ENCODE measurements at regions of chr17 and their contacts with region 1.

Region 1: DNA sequence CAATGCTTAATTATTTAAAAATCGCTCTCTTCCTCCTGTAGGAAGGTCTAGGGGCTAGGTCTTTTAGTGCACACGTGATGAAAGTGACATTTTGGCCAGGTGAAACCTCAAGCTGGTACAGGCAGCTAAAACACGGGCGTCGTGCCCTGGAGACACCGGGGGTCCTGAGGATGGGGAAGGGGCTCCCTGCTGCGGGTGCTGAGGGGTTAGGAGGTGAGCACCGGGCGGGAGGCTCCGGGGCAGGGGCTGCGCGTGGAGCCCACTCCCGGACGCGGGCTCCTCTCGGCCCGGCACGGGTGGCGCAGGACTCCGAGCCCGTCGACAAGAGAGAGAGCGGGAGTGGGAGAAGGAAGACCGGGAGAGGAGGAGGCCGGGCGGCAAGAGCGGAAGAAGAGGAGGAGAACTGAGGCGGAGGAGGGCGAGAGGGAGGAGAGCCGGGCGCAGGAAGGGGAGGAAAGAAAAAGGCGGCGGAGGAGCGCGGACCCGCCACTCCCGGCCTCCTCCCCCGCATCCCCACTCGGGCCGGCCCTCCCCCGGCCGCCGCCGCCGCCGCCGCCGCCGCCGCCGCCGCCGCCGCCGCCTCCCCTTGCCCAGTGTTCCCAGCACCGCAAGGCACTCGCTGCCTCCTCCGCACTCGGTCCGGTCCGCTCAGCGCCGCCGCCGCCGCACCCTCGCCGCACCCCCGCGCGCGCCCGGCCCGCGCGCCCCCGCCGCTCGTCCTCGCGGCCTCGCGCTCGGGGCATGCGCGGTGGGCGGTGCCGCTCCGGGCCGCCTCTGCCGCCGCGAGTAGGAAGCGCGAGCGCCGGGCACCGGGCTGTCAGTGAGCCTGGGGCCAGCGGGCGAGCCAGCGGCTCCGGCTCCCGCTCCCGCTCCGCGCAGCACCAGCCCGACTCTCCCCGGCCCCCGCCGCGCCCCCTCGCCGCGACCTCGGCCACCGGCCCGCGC is at the start of gene PRKCA:
- DNase-seq: peak; percentile 52
- H3K4me3 ChIP-seq: peak within 1 kb of the TSS; percentile 76 to 90 (median 83)
- H3K27ac ChIP-seq: peak within 1 kb of the TSS; percentile 27
- H3K4me1 ChIP-seq: peaks cover 26% of the 10 kb centered on the region
- H3K27me3 ChIP-seq: no peaks in the 10 kb centered on the region
- CTCF ChIP-seq: no peak
- POLR2A ChIP-seq: peak; percentile 93
- total RNA-seq, gene PRKCA: 27.3 and 34.2 TPM in 2 replicates

Region 2: DNA sequence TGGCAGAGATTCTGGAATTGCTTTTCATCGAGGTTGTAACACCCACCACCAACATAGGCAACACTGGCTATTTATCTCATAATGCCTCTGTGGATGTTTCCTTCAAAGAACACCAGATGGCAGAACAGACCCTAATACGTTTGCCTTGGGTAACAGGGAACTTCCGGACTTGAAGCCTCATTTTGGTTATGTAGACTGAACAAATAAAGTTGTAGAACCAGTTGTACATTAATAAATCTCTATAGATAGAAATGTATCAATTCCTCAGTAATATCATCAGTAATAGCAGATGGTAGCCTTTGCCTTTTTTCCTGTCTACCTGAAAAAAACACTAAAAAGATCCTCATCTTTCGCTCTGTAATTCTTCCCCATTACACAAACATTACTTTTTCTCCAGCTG is 47.0 kb before region 1 on chr17:
- CTCF ChIA-PET with region 1: interaction called, 6 read pairs
- POLR2A ChIA-PET with region 1: no interaction called
- dilution Hi-C with region 1: no loop called
- intact Hi-C with region 1: loop called (anchors 1 kb)
- DNase-seq: peak; percentile 74
- H3K4me3 ChIP-seq: no peak overlapping the region
- H3K27ac ChIP-seq: no peak overlapping the region
- H3K4me1 ChIP-seq: peaks cover 2% of the 10 kb centered on the region
- H3K27me3 ChIP-seq: no peaks in the 10 kb centered on the region
- CTCF ChIP-seq: peak; percentile 50 to 58
- POLR2A ChIP-seq: no peak

Region 3: GRCh38 chr17:66290101-66290722 is 11.9 kb before region 1 on chr17:
- CTCF ChIA-PET with region 1: interaction called, 5 read pairs
- POLR2A ChIA-PET with region 1: no interaction called
- dilution Hi-C with region 1: no loop called
- intact Hi-C with region 1: loop called (anchors 2 kb)
- DNase-seq: peak; percentile 15
- H3K4me3 ChIP-seq: no peak overlapping the region
- H3K27ac ChIP-seq: no peak overlapping the region
- H3K4me1 ChIP-seq: no peaks in the 10 kb centered on the region
- H3K27me3 ChIP-seq: no peaks in the 10 kb centered on the region
- CTCF ChIP-seq: no peak
- POLR2A ChIP-seq: no peak

Region 4: DNA sequence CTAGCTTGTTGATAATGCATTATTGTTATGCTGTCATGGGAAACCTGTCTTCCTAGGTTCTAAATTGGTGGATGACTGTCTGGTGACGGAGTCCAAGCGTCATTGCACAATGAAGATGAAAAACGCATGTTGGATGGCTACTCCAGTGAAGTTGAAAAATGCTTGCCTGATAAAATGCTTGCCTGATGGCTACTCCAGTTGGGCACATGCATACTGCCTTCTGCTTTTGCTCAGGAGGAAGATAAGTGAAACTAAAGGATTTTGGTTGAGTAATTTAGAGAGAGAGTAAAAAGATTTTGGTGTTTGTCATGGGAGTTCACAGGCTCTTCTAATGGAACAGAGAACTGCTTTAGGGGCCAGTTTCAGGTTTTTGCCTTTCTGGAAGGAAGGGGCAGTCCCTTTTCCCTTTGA is 118.9 kb after region 1 on chr17:
- CTCF ChIA-PET with region 1: no interaction called
- POLR2A ChIA-PET with region 1: no interaction called
- dilution Hi-C with region 1: no loop called
- intact Hi-C with region 1: loop called (anchors 5 kb)
- DNase-seq: no peak
- H3K4me3 ChIP-seq: no peak overlapping the region
- H3K27ac ChIP-seq: no peak overlapping the region
- H3K4me1 ChIP-seq: no peaks in the 10 kb centered on the region
- H3K27me3 ChIP-seq: no peaks in the 10 kb centered on the region
- CTCF ChIP-seq: no peak
- POLR2A ChIP-seq: no peak

Measured in endothelial cell of umbilical vein (primary cell).